Activated CD4-positive, alpha-beta memory T cell treated with anti-CD3 and anti-CD28 coated beads for 36 hours (primary cell): ENCODE measurements at regions of chr11 and their contacts with region 1.

Region 1: DNA sequence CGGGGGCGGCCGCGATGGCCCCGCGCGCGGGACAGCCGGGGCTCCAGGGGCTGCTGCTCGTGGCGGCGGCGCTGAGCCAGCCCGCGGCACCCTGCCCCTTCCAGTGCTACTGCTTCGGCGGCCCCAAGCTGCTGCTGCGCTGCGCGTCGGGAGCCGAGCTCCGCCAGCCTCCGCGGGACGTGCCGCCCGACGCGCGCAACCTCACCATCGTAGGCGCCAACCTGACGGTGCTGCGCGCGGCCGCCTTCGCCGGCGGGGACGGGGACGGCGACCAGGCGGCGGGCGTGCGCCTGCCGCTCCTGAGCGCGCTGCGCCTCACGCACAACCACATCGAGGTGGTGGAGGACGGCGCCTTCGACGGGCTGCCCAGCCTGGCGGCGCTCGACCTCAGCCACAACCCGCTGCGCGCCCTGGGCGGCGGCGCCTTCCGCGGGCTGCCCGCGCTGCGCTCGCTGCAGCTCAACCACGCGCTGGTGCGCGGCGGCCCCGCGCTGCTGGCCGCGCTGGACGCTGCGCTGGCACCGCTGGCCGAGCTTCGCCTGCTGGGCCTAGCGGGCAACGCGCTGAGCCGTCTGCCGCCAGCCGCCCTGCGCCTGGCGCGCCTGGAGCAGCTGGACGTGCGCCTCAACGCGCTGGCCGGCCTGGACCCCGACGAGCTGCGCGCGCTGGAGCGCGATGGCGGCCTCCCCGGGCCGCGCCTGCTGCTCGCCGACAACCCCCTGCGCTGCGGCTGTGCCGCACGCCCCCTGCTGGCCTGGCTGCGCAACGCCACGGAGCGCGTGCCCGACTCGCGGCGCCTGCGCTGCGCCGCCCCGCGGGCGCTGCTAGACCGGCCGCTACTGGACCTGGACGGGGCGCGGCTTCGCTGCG is 697 bp downstream of the TPBGL start:
- DNase-seq: peak; percentile 91
- H3K4me3 Mint-ChIP-seq: peak overlapping the region; percentile 69
- H3K27ac Mint-ChIP-seq: no peak overlapping the region
- H3K4me1 Mint-ChIP-seq: peaks cover 7% of the 10 kb centered on the region
- H3K27me3 Mint-ChIP-seq: peaks cover 29% of the 10 kb centered on the region

Region 2: GRCh38 chr11:75022759-75023396 is 218.4 kb before region 1 on chr11:
- CTCF ChIA-PET with region 1: interaction called, 120 read pairs
- POLR2A ChIA-PET with region 1: no interaction called
- intact Hi-C with region 1: no loop called
- DNase-seq: peak; percentile 85
- H3K4me3 Mint-ChIP-seq: no peak overlapping the region
- H3K27ac Mint-ChIP-seq: no peak overlapping the region
- H3K4me1 Mint-ChIP-seq: no peaks in the 10 kb centered on the region
- H3K27me3 Mint-ChIP-seq: no peaks in the 10 kb centered on the region

Region 3: DNA sequence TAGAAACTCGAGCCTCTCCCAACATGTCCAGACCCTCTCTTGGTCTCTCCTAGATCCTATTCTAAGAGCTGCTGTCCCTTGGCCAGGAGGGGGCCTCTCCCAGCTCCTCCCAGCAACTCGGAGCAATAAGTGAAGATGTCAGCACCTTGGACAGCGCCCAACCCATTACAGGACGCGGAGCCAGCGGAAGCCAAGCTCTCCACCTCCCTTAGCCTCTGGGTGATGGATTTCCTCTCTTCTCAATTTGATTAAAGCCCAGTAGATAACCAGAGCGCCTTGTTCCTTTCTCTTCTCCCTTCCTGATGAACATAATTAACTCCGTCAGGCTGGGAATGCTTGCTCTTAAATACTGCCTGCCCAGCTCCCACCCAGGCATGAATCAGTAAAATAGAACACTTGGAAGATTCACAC is 26.9 kb before region 1 on chr11:
- CTCF ChIA-PET with region 1: interaction called, 13 read pairs
- POLR2A ChIA-PET with region 1: no interaction called
- intact Hi-C with region 1: loop called (anchors 2 kb)
- DNase-seq: peak; percentile 84
- H3K4me3 Mint-ChIP-seq: no peak overlapping the region
- H3K27ac Mint-ChIP-seq: no peak overlapping the region
- H3K4me1 Mint-ChIP-seq: no peaks in the 10 kb centered on the region
- H3K27me3 Mint-ChIP-seq: peaks cover 20% of the 10 kb centered on the region

Region 4: GRCh38 chr11:75270896-75271418 is 29.7 kb after region 1 on chr11:
- CTCF ChIA-PET with region 1: interaction called, 24 read pairs
- POLR2A ChIA-PET with region 1: no interaction called
- intact Hi-C with region 1: no loop called
- DNase-seq: no peak
- H3K4me3 Mint-ChIP-seq: no peak overlapping the region
- H3K27ac Mint-ChIP-seq: no peak overlapping the region
- H3K4me1 Mint-ChIP-seq: peaks cover 32% of the 10 kb centered on the region
- H3K27me3 Mint-ChIP-seq: no peaks in the 10 kb centered on the region

Region 5: DNA sequence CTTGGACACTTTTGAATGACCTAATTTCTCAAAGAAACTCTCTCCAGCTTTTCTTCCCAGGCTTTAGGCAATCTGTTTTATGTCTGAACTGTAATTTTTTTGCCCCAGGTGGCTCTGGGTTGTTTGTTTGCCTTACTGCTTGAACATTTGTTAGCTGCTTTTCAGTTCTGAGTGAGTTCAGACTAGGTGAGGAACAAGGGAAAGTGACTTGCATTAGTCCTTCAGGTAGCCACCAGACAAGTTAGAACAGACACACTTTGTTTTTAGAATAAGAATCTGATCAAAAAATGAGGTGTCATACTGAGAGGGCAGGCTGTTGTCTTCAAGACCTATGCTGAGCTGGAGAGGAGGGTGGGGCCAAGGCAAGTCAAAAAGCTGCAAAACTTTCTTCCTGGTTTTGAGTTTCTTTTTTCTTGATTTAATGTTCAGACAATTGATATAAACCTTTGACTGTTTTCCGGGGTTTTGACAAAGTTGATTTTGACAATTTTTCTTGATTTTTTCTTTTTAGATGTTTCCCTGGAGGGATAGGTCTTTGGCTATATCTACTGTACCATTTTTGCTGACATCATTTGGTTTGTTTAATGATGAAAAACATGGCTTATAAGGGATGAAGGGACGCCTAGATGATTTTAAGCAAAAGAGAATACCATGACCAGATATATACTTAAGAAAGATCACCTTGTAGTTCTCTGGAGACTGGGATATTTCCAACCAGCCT is 782.2 kb after region 1 on chr11:
- CTCF ChIA-PET with region 1: no interaction called
- POLR2A ChIA-PET with region 1: no interaction called
- intact Hi-C with region 1: no loop called
- DNase-seq: no peak
- H3K4me3 Mint-ChIP-seq: no peak overlapping the region
- H3K27ac Mint-ChIP-seq: no peak overlapping the region
- H3K4me1 Mint-ChIP-seq: peaks cover 10% of the 10 kb centered on the region
- H3K27me3 Mint-ChIP-seq: no peaks in the 10 kb centered on the region